ENCODE measurements at regions of chr5 and their contacts with region 1.

Region 1: GRCh38 chr5:38441453-38442246 is 114.8 kb downstream of the LIFR start:
- DNase-seq: peak; percentile 92
- ATAC-seq: peak; percentile 98
- H3K4me3 Mint-ChIP-seq: no peak overlapping the region
- H3K27ac Mint-ChIP-seq: no peak overlapping the region
- H3K4me1 Mint-ChIP-seq: peaks cover 4% of the 10 kb centered on the region
- H3K27me3 Mint-ChIP-seq: no peaks in the 10 kb centered on the region
- CTCF ChIP-seq: peak; percentile 86

Region 2: DNA sequence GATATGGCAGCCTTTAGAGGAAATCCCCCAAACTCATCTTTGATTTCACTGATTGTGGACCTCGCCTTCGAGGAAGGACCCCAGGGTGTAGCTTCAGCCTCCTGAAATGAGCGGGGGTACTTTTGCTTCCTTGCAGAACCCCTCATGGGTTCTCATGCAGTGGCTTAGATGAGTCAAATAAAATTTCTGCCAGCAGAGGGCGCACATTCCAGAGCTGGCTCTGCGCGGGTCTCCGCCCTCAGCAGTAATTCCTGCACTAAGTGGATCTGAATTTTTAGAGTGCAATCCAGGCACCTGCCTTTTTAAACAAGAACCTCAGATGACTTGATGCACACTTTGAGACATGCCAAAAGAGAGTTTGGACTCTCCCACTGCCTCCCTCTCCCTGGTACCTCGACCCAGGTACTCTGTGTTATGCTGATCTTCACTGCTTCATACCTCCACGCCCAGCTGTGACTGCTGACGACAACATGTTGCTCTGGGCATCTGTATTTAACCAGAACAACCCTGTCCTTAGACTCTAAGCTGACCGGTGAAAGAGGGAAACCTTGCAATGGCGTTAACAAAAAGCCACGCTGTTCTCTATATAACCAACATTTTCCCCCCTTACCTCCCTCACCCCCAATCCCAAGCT is 176.0 kb before region 1 on chr5:
- CTCF ChIA-PET with region 1: interaction called, 11 read pairs
- POLR2A ChIA-PET with region 1: no interaction called
- DNase-seq: peak; percentile 84
- ATAC-seq: peak; percentile 98
- H3K4me3 Mint-ChIP-seq: peak overlapping the region; percentile 40
- H3K27ac Mint-ChIP-seq: no peak overlapping the region
- H3K4me1 Mint-ChIP-seq: 0 out of 2 replicates have a peak, but pooled peaks cover 4% of the 10 kb centered on the region
- H3K27me3 Mint-ChIP-seq: peaks cover 42% of the 10 kb centered on the region
- CTCF ChIP-seq: peak; percentile 73

Region 3: GRCh38 chr5:38463634-38464521 is 22.2 kb after region 1 on chr5:
- CTCF ChIA-PET with region 1: interaction called, 31 read pairs
- POLR2A ChIA-PET with region 1: no interaction called
- DNase-seq: no peak
- ATAC-seq: no peak
- H3K4me3 Mint-ChIP-seq: no peak overlapping the region
- H3K27ac Mint-ChIP-seq: no peak overlapping the region
- H3K4me1 Mint-ChIP-seq: peaks cover 9% of the 10 kb centered on the region
- H3K27me3 Mint-ChIP-seq: no peaks in the 10 kb centered on the region
- CTCF ChIP-seq: no peak

Region 4: DNA sequence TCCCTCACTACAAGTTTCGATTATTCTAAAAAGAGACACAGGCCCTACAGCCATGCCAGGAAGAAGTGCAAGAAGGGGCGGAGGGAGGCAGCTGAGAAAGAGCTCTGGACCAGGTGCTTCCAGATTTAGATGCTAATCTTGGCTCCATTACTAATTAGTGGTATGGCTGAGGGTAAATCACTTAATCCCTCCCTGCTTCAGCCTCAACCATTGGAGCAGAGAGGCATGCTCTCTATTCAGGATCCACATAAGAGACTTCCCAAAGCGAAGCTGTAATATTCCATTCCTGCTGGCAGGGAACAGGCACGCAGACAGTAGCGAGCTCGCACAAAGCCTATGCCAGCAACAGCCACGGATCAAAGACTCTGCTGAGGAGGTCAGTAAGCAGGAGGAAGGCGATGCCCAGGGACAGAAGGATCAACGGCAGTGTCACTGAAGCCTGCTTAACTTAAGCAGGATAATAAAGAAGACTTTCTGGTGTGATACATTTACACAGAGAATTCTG is 90.6 kb after region 1 on chr5:
- CTCF ChIA-PET with region 1: interaction called, 13 read pairs
- POLR2A ChIA-PET with region 1: no interaction called
- DNase-seq: peak; percentile 22
- ATAC-seq: peak; percentile 78
- H3K4me3 Mint-ChIP-seq: peak overlapping the region; percentile 55
- H3K27ac Mint-ChIP-seq: peak overlapping the region; percentile 95
- H3K4me1 Mint-ChIP-seq: peaks cover 61% of the 10 kb centered on the region
- H3K27me3 Mint-ChIP-seq: no peaks in the 10 kb centered on the region
- CTCF ChIP-seq: no peak

Region 5: GRCh38 chr5:38660194-38660668 is 218.6 kb after region 1 on chr5:
- CTCF ChIA-PET with region 1: interaction called, 11 read pairs
- POLR2A ChIA-PET with region 1: no interaction called
- DNase-seq: peak; percentile 61
- ATAC-seq: peak; percentile 99
- H3K4me3 Mint-ChIP-seq: no peak overlapping the region; the same call in 1 of the 2 replicates
- H3K27ac Mint-ChIP-seq: no peak overlapping the region
- H3K4me1 Mint-ChIP-seq: peaks cover 21% of the 10 kb centered on the region
- H3K27me3 Mint-ChIP-seq: no peaks in the 10 kb centered on the region
- CTCF ChIP-seq: no peak

Region 6: DNA sequence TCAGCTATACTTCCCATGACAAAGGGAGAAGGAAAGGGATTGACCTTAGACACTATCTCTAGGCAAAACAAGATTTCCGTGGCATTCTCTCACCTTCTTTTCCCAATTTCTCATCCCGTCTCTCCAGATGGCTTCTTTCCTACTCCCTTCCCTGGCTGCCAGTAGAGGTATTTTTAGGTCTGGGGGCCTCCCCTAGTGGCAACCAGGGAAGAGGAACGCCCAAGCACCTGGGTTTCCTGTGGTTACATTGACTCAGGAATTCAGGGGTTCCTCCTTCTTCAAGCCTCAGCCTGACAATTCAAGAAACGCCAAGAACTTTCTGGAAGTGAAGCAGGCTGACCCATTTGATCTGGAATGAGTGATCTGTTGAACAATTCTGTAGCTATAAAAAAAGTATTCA is 292.7 kb after region 1 on chr5:
- CTCF ChIA-PET with region 1: interaction called, 13 read pairs
- POLR2A ChIA-PET with region 1: no interaction called
- DNase-seq: peak; percentile 61
- ATAC-seq: peak; percentile 98
- H3K4me3 Mint-ChIP-seq: no peak overlapping the region
- H3K27ac Mint-ChIP-seq: no peak overlapping the region
- H3K4me1 Mint-ChIP-seq: peaks cover 6% of the 10 kb centered on the region
- H3K27me3 Mint-ChIP-seq: no peaks in the 10 kb centered on the region
- CTCF ChIP-seq: no peak